Mucosa of descending colon (tissue), 3 donors: ENCODE measurements at regions of chr1 and their contacts with region 1.

Region 1: DNA sequence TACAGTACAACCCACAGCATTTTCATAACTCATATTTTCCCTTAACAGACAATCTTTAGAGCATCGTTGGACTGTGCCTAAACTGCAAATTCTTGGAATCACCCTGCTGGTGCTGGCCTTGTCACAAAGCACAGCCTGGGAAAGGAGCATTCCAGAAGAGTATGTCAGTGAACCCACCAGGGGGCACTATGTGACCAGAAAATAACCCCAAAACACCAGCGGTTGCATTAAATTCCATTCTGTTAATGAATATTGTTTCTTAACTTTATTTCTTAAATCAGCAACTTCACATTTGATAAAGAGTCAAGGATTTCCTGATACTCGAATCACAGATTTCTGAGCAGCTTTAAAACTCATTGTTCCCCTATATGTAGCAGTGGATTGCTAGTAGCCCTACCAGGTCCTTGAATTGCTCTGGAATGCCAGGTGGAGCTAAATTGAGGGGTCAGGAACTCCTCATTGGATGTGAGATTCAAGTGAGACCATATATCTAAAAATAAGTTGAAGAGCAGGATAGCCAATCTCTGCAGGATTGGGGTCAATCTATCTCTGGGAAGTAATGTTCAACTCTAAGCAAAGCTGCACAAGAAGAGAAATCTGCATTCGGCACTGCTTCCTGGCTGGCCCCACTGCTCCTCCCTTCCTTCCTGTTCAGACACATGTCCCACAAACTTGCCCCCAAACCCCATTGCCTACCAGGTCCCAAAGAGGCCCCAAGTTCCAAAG is 12.7 kb upstream of the RAB4A start:
- DNase-seq: peak in 1 of 3 donors; percentile 86
- ATAC-seq: peak; percentile 80
- H3K4me3 ChIP-seq: no peak overlapping the region
- H3K4me1 ChIP-seq: no peaks in the 10 kb centered on the region
- CTCF ChIP-seq: peak; percentile 45

Region 2: DNA sequence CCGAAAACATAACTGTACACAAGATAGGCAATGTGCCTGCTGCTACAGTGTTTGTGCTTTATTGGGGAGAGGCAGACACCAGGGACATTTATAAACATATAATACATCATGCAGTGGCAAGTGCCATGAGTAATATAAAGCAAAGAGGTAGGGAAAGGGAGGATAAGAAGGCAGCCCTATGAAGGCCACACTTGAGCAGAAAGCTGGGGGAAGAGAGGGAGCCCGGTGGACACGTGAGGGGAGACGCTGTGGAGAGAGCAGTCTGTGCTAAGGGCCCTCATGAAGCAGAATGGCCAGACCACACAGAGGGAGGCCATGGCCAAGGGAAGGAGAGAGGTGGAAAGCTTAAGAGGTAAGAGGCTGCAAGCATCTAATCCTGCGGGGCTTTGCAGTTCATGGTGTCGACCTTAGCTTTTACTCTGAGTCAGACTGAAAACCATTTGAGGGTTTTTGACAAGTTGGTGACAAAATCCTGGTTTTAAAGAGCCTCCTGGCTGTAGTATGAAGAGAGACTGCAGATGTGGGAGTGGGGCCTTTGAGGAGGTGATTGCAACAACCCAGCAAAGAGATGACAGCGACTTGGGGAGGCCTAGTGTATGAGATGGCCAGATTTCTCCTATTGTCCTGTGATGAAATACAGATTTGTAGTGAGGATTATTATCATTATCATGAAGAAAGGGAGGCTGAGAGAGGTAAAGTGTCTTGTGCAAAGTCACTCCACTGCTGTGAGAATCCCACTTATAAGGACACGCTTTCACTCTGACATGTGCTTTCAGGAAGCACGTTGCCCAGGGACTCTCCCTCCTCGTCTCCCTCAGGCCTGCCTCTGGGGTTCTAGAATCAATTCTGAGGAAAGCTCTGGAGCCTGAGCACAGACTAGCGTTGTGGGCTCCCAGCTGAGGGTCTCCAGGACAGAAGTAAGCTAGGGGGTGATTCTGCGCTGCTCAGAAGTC is 330.0 kb before region 1 on chr1:
- intact Hi-C with region 1: no loop called
- DNase-seq: no peak
- ATAC-seq: no peak
- H3K4me3 ChIP-seq: no peak overlapping the region
- H3K4me1 ChIP-seq: no peaks in the 10 kb centered on the region
- CTCF ChIP-seq: no peak

Region 3: GRCh38 chr1:229378586-229379367 is 120.6 kb after region 1 on chr1:
- intact Hi-C with region 1: no loop called
- DNase-seq: no peak
- ATAC-seq: no peak
- H3K4me3 ChIP-seq: no peak overlapping the region
- H3K4me1 ChIP-seq: no peaks in the 10 kb centered on the region
- CTCF ChIP-seq: no peak

Region 4: GRCh38 chr1:229420765-229421164 is 162.6 kb after region 1 on chr1:
- intact Hi-C with region 1: no loop called
- DNase-seq: peak in 1 of 3 donors; percentile 12
- ATAC-seq: peak; percentile 77
- H3K4me3 ChIP-seq: no peak overlapping the region
- H3K4me1 ChIP-seq: no peaks in the 10 kb centered on the region
- CTCF ChIP-seq: no peak

Region 5: DNA sequence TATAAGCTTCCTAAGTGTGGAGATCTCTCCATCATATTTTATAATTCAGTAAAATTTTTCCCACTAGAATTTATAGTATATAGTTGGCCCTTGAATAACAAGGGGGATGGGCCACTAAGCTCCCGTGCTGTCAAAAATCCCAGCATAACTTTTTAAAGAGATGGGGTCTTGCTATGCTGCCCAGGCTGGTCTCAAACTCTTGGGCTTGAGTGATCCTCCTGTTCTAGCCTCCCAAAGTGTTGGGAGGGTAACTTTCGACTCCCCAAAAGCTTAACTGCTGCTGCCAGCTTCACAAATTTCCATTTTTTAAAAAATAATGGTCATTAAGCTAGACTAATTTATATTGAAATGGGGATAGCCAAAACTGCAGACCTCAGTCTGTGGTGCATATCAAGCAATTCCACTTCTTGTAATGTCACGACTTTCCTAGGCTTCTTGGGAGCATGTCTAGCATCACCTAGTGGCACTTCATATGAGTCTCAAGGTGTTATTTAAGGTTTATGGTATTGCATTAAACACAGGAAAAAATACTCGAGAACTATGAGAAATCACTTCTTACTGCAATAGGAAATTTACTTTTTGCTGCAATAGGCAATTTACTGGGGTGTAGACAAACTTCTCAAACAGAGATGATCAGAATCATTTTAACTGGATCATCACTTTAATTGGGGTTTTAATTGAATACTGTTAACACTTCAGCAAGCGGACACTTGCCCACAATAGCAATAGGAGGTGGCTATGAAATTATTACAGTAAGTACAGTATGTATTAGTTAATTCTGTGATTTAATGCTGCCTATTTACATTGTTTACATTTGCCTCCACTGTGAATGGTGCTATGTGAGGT is 195.0 kb after region 1 on chr1:
- intact Hi-C with region 1: loop called in 1 of 2 experiments (anchors 10 kb)
- DNase-seq: no peak
- ATAC-seq: no peak
- H3K4me3 ChIP-seq: no peak overlapping the region
- H3K4me1 ChIP-seq: no peaks in the 10 kb centered on the region
- CTCF ChIP-seq: no peak